AG04449 (cell line): ENCODE measurements at regions of chr9 and their contacts with region 1.

Region 1: DNA sequence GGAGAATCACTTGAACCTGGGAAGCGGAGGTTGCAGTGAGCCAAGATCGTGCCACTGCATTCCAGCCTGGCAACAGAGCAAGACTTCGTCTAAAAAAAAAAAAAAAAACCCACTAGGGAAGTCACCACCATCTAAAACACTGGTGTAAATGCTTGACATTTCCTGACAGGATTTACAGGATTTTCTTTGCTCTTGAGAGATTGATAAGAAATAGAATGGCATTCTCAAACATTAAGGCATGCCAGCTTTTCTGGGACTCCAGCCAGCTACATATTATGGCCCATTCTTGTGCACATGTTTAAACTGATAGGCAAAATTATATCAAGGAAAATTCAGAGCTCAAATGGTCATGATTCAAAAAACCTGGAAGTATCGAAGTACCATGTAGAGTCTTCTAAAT is 28.7 kb downstream of the GTF3C4 start:
- DNase-seq: no peak
- H3K4me3 ChIP-seq: no peak overlapping the region
- CTCF ChIP-seq: no peak

Region 2: DNA sequence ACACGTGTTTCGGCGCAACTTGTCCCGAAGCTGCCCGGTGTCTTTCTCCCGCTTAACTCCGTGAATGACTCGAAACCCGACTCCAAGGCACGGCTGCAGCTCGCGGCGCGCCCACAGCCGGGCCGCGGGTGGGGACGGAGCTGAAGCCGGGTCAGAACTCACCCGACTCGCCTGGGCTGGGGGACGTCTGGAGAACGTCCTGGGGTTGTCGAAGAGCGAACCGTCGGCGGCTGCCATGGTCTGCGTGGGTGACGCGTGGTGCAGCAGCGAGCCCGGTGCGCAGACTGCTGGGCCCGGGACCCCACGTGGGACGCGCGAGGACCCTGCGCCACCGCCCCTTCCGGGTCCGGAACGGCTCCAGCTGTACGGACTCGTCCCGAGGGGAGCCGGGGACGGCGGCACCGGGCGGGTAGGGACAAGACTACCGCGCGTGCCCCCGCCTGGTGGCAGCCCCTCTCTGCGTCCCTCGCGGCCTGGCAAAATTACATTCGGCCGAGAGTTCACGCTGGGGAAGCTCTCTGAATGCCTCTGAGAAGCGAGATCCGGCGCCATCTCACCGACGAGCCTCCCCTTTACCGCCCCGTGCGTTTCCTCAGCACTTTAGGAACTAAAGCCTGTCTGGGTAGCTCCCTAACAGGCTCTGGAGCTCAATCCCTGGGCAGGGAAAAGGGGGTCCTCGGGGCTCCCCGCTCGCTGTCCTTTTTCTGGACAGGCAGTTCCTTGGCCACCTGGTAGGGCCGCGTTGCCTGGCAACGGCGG is 29.1 kb before region 1 on chr9 and contains the start of gene DDX31:
- CTCF ChIA-PET with region 1: interaction called, 10 read pairs
- POLR2A ChIA-PET with region 1: no interaction called
- DNase-seq: no peak
- H3K4me3 ChIP-seq: peak within 1 kb of the TSS; percentile 98
- CTCF ChIP-seq: no peak

Region 3: GRCh38 chr9:132679946-132680625 is 18.9 kb before region 1 on chr9:
- CTCF ChIA-PET with region 1: no interaction called
- POLR2A ChIA-PET with region 1: no interaction called
- DNase-seq: no peak
- H3K4me3 ChIP-seq: no peak overlapping the region
- CTCF ChIP-seq: no peak

Region 4: DNA sequence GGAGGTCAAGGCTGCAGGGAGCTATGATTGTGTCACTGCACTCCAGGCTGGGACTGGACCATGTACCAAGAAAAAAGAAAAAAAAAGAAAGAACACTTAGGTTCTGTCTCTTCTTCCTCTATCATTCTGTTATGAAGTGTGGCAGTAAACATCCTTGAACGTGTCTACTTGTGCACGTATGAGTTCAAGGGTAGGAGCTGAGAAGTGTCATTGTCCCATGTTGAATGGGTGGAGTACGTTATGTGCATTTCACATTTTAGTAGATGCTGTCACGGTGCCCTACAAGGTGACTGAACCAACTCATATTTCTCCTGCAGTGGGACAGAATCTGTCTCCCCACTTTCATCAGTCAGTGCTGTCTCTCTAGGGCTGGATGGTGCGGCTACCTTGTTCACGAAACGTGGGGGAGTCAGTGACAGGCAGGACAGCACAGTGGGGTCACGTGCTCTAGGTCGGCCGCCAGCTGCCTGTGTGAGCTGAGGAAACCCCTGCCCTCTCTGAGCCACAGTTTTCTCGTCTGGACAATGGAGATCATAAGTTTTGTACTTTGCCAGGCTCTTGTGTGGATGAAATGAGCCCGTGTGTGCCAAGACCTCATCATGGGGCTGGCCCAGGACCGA is 18.4 kb after region 1 on chr9:
- CTCF ChIA-PET with region 1: no interaction called
- POLR2A ChIA-PET with region 1: no interaction called
- DNase-seq: no peak
- H3K4me3 ChIP-seq: no peak overlapping the region
- CTCF ChIP-seq: no peak